ENCODE measurements at regions of chr6 and their contacts with region 1.

Region 1: DNA sequence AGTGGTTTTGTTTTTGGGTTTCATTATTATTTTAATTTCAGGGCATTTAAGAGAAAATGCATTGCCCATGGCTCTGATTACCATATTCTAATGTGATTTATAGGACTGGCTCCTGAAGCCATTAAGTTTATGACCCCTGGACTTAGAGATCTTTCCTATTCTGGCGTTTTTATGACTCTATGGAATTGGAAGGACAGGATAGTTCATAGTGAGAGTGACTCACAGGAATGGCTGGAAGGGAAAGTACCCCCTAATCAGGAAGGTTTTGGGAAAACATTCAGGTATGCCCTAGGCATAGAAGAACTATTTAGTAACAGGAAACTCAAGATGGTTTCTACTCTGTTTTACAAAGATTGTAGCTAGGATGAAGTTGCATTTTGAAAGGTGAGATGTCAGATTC is 108.6 kb upstream of the SLC2A12 start:
- DNase-seq: no peak
- ATAC-seq: no peak

Region 2: DNA sequence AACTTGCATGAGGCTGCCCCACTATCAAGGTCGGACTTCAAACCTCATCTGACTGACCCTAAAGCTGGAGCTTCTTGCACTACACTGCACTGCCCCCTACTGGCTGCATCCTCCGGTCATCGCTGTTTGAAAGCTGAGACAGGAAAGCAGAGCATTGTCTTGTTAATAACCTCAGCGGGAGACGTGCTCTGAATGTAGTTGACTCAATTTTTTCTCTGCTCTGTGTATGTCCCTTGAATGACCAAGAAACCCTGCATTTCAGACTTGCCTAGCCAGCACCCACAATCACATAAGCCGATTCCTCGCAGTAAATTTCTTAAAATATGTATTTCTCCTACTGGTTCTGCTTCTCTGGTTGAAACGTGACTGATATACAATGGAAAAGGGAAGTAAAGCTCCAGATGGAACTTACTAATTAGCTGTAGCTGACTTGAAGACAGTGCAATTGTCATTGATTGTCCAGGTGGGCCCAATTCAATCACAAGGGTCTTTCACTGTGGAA is 244.3 kb before region 1 on chr6:
- intact Hi-C with region 1: no loop called
- DNase-seq: peak; percentile 93
- ATAC-seq: peak; percentile 94

Region 3: DNA sequence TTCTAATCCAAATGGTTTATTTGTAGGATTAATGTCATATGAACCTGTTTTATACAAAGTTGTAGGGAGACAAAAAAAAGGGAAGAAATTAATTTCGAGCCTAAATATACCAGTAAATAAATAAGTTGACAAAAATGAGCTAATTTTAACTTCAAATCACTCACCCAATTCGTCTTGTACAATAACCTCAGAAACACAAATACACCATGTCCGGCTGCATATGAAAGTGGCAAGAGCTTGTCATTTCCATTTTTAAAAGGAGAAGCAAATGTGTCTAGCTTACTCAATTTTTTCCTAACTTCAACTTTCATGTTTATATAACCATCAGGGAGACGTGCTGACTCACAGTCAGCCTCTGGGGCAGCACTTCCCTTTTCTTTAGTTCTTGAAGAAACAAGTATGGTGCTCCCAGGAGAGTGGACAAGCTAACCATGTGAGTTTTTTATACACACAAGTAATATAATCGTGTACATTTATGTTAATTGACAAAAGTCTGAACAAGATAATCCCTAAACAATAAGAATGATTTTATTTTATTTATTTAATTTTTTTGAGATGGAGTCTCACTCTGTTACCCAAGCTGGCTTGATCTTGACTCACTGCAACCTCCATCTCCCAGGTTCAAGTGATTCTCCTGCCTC is 212.4 kb after region 1 on chr6:
- intact Hi-C with region 1: no loop called
- DNase-seq: peak; percentile 63
- ATAC-seq: peak; percentile 88

Region 4: GRCh38 chr6:134882426-134883038 is 721.5 kb after region 1 on chr6:
- intact Hi-C with region 1: loop called (anchors 5 kb)
- DNase-seq: peak; percentile 70
- ATAC-seq: peak; percentile 86

Region 5: GRCh38 chr6:134938896-134939295 is 777.9 kb after region 1 on chr6:
- intact Hi-C with region 1: loop called (anchors 5 kb)
- DNase-seq: no peak
- ATAC-seq: no peak